Endothelial cell of umbilical vein (primary cell): ENCODE measurements at regions of chr18 and their contacts with region 1.

Region 1: DNA sequence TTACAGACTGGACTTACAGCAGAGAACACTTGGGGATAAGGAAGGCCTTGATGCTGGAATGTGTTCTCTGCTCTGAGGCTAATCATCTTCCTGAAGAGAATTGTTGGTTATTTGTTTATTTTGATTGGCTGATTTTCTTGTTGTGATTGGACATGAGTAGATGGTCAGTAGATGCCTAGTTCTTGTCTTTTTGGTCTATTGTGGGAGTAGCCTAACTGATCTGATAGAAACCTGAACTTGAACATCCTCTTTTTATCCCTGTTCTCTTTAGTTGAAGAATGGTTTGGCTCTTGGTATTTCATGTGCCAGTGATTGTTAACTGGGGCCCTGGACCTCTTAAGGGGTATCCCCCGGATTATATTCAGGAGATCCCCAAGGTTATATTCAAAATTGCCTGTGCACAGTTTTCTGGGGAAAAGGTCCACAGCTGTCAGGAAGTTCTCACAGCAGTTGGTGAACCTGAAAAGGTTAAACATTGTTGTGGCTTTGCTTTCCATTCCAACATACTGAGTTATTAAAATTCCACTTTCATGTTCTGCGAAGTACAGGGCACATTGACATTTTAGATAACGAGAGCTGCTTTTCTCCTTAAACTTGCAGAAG is 13.6 kb downstream of the TWSG1 start:
- DNase-seq: peak; percentile 53
- H3K4me3 ChIP-seq: no peak overlapping the region
- H3K27ac ChIP-seq: peak overlapping the region; percentile 48
- H3K4me1 ChIP-seq: peaks cover 16% of the 10 kb centered on the region
- H3K27me3 ChIP-seq: no peaks in the 10 kb centered on the region
- CTCF ChIP-seq: no peak
- POLR2A ChIP-seq: no peak

Region 2: GRCh38 chr18:9304388-9305070 is 43.7 kb before region 1 on chr18:
- CTCF ChIA-PET with region 1: no interaction called
- POLR2A ChIA-PET with region 1: no interaction called
- dilution Hi-C with region 1: no loop called
- intact Hi-C with region 1: no loop called
- DNase-seq: no peak
- H3K4me3 ChIP-seq: no peak overlapping the region
- H3K27ac ChIP-seq: no peak overlapping the region
- H3K4me1 ChIP-seq: no peaks in the 10 kb centered on the region
- H3K27me3 ChIP-seq: no peaks in the 10 kb centered on the region
- CTCF ChIP-seq: no peak
- POLR2A ChIP-seq: no peak

Region 3: DNA sequence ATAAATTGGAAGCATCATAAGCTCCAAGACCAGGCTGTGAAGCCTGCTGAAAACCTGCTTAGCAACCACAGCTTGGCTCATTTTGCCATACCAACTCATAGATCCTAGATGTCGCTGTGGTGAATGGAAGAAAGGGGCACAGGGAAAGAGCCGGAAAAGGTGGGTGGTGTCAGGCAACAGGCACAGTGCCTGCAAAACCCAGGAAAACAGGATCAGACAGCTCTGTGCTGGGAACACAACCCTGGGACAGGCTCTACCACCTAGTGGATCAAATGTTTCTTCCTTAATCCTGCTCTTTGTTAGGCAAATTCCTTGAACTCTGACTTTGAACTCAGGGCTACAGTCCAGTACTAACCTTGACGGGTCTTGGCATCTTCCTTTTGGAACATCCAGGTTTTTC is 18.0 kb after region 1 on chr18:
- CTCF ChIA-PET with region 1: interaction called, 10 read pairs
- POLR2A ChIA-PET with region 1: no interaction called
- dilution Hi-C with region 1: no loop called
- intact Hi-C with region 1: no loop called
- DNase-seq: peak; percentile 79
- H3K4me3 ChIP-seq: no peak overlapping the region
- H3K27ac ChIP-seq: no peak overlapping the region
- H3K4me1 ChIP-seq: peaks cover 7% of the 10 kb centered on the region
- H3K27me3 ChIP-seq: no peaks in the 10 kb centered on the region
- CTCF ChIP-seq: peak; percentile 47 to 52
- POLR2A ChIP-seq: no peak

Region 4: DNA sequence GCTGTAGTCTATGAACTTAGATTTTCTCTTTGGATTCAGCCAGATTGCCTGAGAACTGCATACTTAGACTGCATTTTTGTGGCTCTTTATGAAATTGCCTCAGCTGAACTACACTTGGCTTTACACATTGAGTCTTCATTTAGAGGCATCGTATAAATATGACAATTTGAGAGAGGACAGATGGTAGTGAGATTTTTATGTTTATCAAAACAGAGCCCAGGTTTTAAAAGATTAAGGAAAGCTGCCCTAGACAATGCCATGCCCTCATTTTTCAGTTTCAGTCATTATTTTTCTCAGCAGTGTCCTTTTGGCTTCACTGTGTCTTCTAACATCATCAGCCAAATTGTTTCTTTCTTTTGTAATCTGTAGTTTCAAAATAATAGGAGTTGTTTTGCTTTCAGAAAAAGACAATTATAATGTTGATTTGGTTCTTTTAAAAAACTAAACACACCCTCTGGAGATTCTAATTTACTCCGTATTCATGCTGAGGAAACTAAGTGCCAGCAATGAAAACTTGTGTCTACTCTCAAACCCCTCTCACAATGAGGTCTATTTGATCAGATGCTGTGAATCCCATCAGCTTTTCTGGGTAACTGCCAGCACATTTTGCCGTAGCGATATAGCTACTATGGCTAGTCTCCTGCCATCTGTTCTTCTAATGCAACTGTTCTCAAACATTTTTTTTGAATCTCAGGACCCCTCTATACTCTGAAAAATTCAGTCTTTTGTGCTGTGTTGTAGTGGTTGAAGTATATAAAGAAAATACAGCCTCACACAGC is 32.6 kb after region 1 on chr18:
- CTCF ChIA-PET with region 1: no interaction called
- POLR2A ChIA-PET with region 1: no interaction called
- dilution Hi-C with region 1: no loop called
- intact Hi-C with region 1: loop called (anchors 1 kb)
- DNase-seq: no peak
- H3K4me3 ChIP-seq: no peak overlapping the region
- H3K27ac ChIP-seq: no peak overlapping the region
- H3K4me1 ChIP-seq: no peaks in the 10 kb centered on the region
- H3K27me3 ChIP-seq: no peaks in the 10 kb centered on the region
- CTCF ChIP-seq: no peak
- POLR2A ChIP-seq: no peak

Region 5: DNA sequence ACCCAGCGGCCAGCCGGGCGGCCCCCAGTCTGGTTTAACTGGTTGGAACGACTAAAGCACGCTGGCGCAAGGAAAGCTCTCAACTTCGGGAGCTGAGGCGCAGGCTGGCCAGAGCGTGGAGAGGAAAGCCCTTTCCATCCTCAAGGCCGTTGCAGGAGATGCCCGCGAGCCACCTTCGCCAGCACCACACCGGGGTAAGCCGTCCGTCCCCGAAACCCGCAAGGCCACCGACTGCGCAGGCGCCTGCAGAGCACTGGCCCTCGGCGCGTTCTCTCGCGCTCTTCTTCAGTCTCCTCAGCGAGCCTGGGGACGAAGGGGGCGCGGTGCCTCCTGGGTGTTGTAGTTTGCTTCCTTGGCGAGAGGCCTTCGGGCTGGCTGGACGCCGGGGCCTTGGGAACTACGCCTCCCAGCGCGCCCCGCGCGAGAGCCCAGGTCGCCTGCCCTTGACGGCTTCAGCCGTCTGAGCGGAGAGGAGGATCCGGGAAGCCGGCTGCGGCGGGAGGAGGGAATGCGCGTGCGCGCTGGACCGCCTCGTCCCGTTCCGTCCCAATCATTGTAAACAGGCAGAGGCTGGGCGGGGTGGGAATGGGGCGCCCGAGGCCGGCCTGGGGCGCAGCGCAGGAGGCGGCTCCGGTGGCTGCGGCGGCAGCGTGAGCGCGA is 126.9 kb after region 1 on chr18 and contains the start of gene RALBP1:
- CTCF ChIA-PET with region 1: no interaction called
- POLR2A ChIA-PET with region 1: no interaction called
- dilution Hi-C with region 1: no loop called
- intact Hi-C with region 1: no loop called
- DNase-seq: peak; percentile 100
- H3K4me3 ChIP-seq: peak within 1 kb of the TSS; percentile 90 to 100 (median 91)
- H3K27ac ChIP-seq: peak within 1 kb of the TSS; percentile 74
- H3K4me1 ChIP-seq: peaks cover 14% of the 10 kb centered on the region
- H3K27me3 ChIP-seq: no peaks in the 10 kb centered on the region
- CTCF ChIP-seq: peak in 1 of 2 donors; percentile 11
- POLR2A ChIP-seq: peak; percentile 93
- total RNA-seq, gene RALBP1: 63.5 and 68.4 TPM in 2 replicates